Activated CD4-positive, alpha-beta T cell treated with anti-CD3 and anti-CD28 coated beads for 36 hours (primary cell): ENCODE measurements at regions of chr3 and their contacts with region 1.

Region 1: GRCh38 chr3:98593046-98593936 is at the start of gene CPOX:
- DNase-seq: peak; percentile 95
- ATAC-seq: peak; percentile 99
- H3K4me3 Mint-ChIP-seq: peak within 1 kb of the TSS; percentile 88
- H3K27ac Mint-ChIP-seq: peak within 1 kb of the TSS; percentile 90
- H3K4me1 Mint-ChIP-seq: peaks cover 51% of the 10 kb centered on the region
- H3K27me3 Mint-ChIP-seq: no peaks in the 10 kb centered on the region
- total RNA-seq, gene CPOX: 40.3 to 41.9 TPM

Region 2: DNA sequence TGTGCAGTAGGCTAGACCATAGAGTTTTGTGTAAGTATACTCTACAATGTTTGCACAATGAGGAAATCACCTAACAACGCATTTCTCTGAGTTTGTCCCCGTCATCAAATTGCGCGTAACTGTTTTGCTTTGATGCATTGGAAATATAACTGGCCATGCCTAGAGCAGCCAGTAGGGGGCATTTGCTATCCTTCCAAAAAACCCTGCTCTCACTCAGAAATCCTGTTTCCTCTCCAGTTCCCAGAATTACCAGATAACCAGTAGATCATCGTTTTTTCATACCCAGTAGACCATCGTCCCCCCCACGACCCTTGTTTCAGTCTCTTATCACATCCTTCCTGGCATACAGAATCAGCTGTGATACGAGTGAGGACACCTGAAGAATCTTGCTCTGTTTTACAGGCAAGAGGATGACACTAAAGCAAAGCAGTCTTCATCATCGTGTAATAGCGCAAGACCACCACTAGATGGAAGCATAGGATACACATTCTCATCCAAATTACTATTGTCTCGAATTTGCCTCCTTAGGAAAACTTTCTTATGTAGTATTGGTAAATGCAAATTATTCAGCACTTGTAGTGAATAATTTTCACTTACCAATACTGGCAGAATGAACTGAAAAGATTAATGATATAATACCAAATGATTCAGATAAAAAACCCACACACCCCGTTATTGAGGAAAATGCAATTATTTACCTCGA is 553.8 kb before region 1 on chr3:
- CTCF ChIA-PET with region 1: interaction called, 5 read pairs
- POLR2A ChIA-PET with region 1: no interaction called
- intact Hi-C with region 1: loop called (anchors 2 to 5 kb)
- DNase-seq: peak; percentile 84
- ATAC-seq: peak; percentile 88
- H3K4me3 Mint-ChIP-seq: peak overlapping the region; percentile 76
- H3K27ac Mint-ChIP-seq: peak overlapping the region; percentile 97
- H3K4me1 Mint-ChIP-seq: peaks cover 12% of the 10 kb centered on the region
- H3K27me3 Mint-ChIP-seq: peaks cover 4% of the 10 kb centered on the region

Region 3: GRCh38 chr3:98343647-98344507 is 249.4 kb before region 1 on chr3:
- CTCF ChIA-PET with region 1: no interaction called
- POLR2A ChIA-PET with region 1: no interaction called
- intact Hi-C with region 1: loop called in 1 of 2 experiments (anchors 5 kb)
- DNase-seq: peak; percentile 56
- ATAC-seq: no peak
- H3K4me3 Mint-ChIP-seq: no peak overlapping the region
- H3K27ac Mint-ChIP-seq: no peak overlapping the region
- H3K4me1 Mint-ChIP-seq: peaks cover 2% of the 10 kb centered on the region
- H3K27me3 Mint-ChIP-seq: peaks cover 11% of the 10 kb centered on the region

Region 4: GRCh38 chr3:98563661-98564281 is 29.5 kb before region 1 on chr3:
- CTCF ChIA-PET with region 1: interaction called, 11 read pairs
- POLR2A ChIA-PET with region 1: no interaction called
- intact Hi-C with region 1: no loop called
- DNase-seq: no peak
- ATAC-seq: peak; percentile 24
- H3K4me3 Mint-ChIP-seq: no peak overlapping the region
- H3K27ac Mint-ChIP-seq: peak overlapping the region; percentile 74
- H3K4me1 Mint-ChIP-seq: peaks cover 77% of the 10 kb centered on the region
- H3K27me3 Mint-ChIP-seq: no peaks in the 10 kb centered on the region

Region 5: GRCh38 chr3:98817547-98818041 is 224.3 kb after region 1 on chr3:
- CTCF ChIA-PET with region 1: interaction called, 7 read pairs
- POLR2A ChIA-PET with region 1: no interaction called
- intact Hi-C with region 1: loop called (anchors 1 to 2 kb)
- DNase-seq: no peak
- ATAC-seq: peak; percentile 73
- H3K4me3 Mint-ChIP-seq: no peak overlapping the region
- H3K27ac Mint-ChIP-seq: no peak overlapping the region
- H3K4me1 Mint-ChIP-seq: no peaks in the 10 kb centered on the region
- H3K27me3 Mint-ChIP-seq: no peaks in the 10 kb centered on the region